ENCODE measurements at regions of chr10 and their contacts with region 1.

Region 1: DNA sequence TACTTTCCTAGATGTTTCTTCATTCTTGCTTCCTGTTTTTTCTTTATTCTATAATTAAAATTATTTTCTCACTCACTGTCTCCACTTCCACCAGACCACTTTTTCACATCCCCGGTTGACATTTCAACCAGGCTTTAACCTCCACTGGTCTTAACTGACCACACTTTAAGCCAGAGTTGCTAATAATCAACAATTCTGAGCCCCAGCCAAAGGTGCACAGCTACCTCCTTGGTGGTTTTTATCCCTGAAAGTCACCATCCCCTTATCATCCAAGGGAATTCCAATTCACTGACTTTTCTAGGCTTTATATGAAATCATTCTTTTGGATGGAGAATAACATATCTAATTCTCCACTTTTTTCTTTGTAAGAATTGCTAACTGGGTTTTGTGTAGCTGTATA is 138.9 kb downstream of the FRMD4A start:
- DNase-seq: no peak
- ATAC-seq: no peak
- H3K4me3 ChIP-seq: no peak overlapping the region
- H3K4me3 Mint-ChIP-seq: no peak overlapping the region
- H3K27ac ChIP-seq: no peak overlapping the region
- H3K27ac Mint-ChIP-seq: no peak overlapping the region
- H3K4me1 ChIP-seq: no peaks in the 10 kb centered on the region
- H3K4me1 Mint-ChIP-seq: peaks cover 0 to 4% (median under 1%) of the 10 kb centered on the region in 7 donors
- H3K27me3 ChIP-seq: no peaks in the 10 kb centered on the region
- H3K27me3 Mint-ChIP-seq: peaks cover 0 to 72% (median 18%) of the 10 kb centered on the region in 5 donors

Region 2: DNA sequence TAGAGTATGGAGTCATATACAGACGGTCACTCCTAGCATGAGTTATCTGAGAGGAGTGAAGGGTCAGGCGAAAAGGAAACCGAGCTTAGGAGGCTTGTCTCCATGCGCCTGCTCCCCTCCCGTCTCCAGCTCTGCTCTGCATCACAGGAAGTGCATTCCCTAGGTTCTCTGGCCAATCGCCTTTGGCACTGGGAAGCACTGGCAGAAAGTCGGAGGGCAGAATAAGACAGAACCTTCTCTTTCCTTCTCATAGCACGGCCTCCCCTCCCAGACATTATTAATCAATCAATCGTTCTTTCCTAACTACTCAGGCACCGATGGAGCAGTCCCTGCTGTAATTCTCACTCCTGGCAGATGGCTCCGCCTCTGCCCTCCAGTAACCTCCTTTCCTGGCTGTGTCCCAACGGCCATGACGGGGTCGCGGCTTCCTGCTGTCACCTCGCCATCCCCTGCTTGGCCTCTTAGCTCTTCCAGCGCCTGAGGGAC is 38.3 kb before region 1 on chr10:
- CTCF ChIA-PET with region 1: no interaction called
- POLR2A ChIA-PET with region 1: no interaction called
- intact Hi-C with region 1: no loop called
- DNase-seq: no peak
- ATAC-seq: no peak
- H3K4me3 ChIP-seq: no peak overlapping the region
- H3K4me3 Mint-ChIP-seq: no peak overlapping the region
- H3K27ac ChIP-seq: no peak overlapping the region
- H3K27ac Mint-ChIP-seq: no peak overlapping the region
- H3K4me1 ChIP-seq: no peaks in the 10 kb centered on the region
- H3K4me1 Mint-ChIP-seq: peaks cover 0 to 2% (median 0%) of the 10 kb centered on the region in 7 donors
- H3K27me3 ChIP-seq: no peaks in the 10 kb centered on the region
- H3K27me3 Mint-ChIP-seq: peaks cover 13 to 36% (median 28%) of the 10 kb centered on the region in 5 donors

Region 3: DNA sequence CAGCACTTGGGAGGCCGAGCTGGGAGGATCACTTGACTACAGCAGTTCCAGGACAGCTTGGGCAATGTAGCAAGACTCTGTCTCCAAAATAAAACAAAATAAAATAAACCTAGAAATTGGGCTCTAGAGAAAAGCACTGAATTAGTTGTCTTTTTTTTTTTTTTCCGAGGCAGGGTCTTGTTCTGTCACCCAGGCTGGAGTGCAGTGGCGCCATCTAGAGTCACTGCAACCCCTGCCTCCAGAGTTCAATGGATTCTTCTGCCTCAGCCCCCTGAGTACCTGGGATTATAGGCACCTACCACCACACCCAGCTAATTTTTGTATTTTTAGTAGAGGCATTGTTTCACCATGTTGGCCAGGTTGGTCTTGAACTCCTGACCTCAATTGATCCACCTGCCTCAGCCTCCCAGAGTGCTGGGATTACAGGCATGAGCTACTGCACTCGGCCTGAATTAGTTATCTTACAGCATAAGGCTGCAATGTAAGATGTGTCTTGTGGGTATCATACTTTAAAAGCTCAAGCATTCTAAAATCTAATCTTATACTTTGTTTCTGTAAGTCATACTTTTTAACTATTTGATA is 780.1 kb after region 1 on chr10:
- CTCF ChIA-PET with region 1: interaction called, 7 read pairs
- POLR2A ChIA-PET with region 1: no interaction called
- intact Hi-C with region 1: loop called in 1 of 2 experiments (anchors 5 kb)
- DNase-seq: peak in 8 of 9 donors; percentile 16 to 62 (median 48)
- ATAC-seq: peak; percentile 73
- H3K4me3 ChIP-seq: no peak overlapping the region
- H3K4me3 Mint-ChIP-seq: no peak overlapping the region
- H3K27ac ChIP-seq: no peak overlapping the region
- H3K27ac Mint-ChIP-seq: no peak overlapping the region
- H3K4me1 ChIP-seq: no peaks in the 10 kb centered on the region
- H3K4me1 Mint-ChIP-seq: peaks cover 0 to 6% (median 5%) of the 10 kb centered on the region in 7 donors
- H3K27me3 ChIP-seq: peaks cover 0 to 4% of the 10 kb centered on the region in 2 donors
- H3K27me3 Mint-ChIP-seq: peaks cover 8 to 28% (median 25%) of the 10 kb centered on the region in 5 donors

Region 4: GRCh38 chr10:15106352-15107013 is 914.6 kb after region 1 on chr10:
- CTCF ChIA-PET with region 1: interaction called, 3 read pairs
- POLR2A ChIA-PET with region 1: no interaction called
- intact Hi-C with region 1: loop called (anchors 5 to 10 kb)
- DNase-seq: peak; percentile 41 to 67 (median 58)
- ATAC-seq: peak; percentile 99
- H3K4me3 ChIP-seq: no peak overlapping the region
- H3K4me3 Mint-ChIP-seq: no peak overlapping the region
- H3K27ac ChIP-seq: peak overlapping the region; percentile 9
- H3K27ac Mint-ChIP-seq: peak overlapping the region; percentile 26 to 88 (median 68)
- H3K4me1 ChIP-seq: no peaks in the 10 kb centered on the region
- H3K4me1 Mint-ChIP-seq: peaks cover 3 to 9% (median 5%) of the 10 kb centered on the region in 7 donors
- H3K27me3 ChIP-seq: no peaks in the 10 kb centered on the region
- H3K27me3 Mint-ChIP-seq: no peaks in the 10 kb centered on the region

Measured in naive thymus-derived CD4-positive, alpha-beta T cell (primary cell).